ENCODE measurements at regions of chr18 and their contacts with region 1.

Region 1: GRCh38 chr18:50287441-50288347 is at the start of gene CXXC1:
- DNase-seq: peak; percentile 97
- H3K4me3 ChIP-seq: peak within 1 kb of the TSS; percentile 100
- H3K27ac ChIP-seq: peak within 1 kb of the TSS; percentile 55
- H3K4me1 ChIP-seq: no peaks in the 10 kb centered on the region
- CTCF ChIP-seq: peak; percentile 59
- total RNA-seq, gene CXXC1: 54.4 and 61.7 TPM in 2 replicates

Region 2: GRCh38 chr18:50247561-50247960 is 40.1 kb before region 1 on chr18:
- CTCF ChIA-PET with region 1: no interaction called
- POLR2A ChIA-PET with region 1: no interaction called
- intact Hi-C with region 1: no loop called
- DNase-seq: no peak
- H3K4me3 ChIP-seq: no peak overlapping the region
- H3K27ac ChIP-seq: no peak overlapping the region
- H3K4me1 ChIP-seq: no peaks in the 10 kb centered on the region
- CTCF ChIP-seq: no peak

Region 3: GRCh38 chr18:50307738-50308470 is 20.2 kb after region 1 on chr18:
- CTCF ChIA-PET with region 1: no interaction called
- POLR2A ChIA-PET with region 1: interaction called, 7 read pairs
- intact Hi-C with region 1: loop called (anchors 2 kb)
- DNase-seq: peak; percentile 96
- H3K4me3 ChIP-seq: peak overlapping the region; percentile 55
- H3K27ac ChIP-seq: peak overlapping the region; percentile 80
- H3K4me1 ChIP-seq: peaks cover 40% of the 10 kb centered on the region
- CTCF ChIP-seq: no peak

Region 4: GRCh38 chr18:50315100-50315871 is 27.6 kb after region 1 on chr18:
- CTCF ChIA-PET with region 1: no interaction called
- POLR2A ChIA-PET with region 1: interaction called, 3 read pairs
- intact Hi-C with region 1: loop called (anchors 1 kb)
- DNase-seq: peak; percentile 74
- H3K4me3 ChIP-seq: peak overlapping the region; percentile 52
- H3K27ac ChIP-seq: peak overlapping the region; percentile 93
- H3K4me1 ChIP-seq: peaks cover 71% of the 10 kb centered on the region
- CTCF ChIP-seq: no peak

Measured in OCI-LY7 (cell line).